ENCODE measurements at regions of chr18 and their contacts with region 1.

Region 1: GRCh38 chr18:34611904-34612303 is 98.2 kb upstream of the DTNA start:
- DNase-seq: peak; percentile 79

Region 2: GRCh38 chr18:34562252-34562870 is 49.5 kb before region 1 on chr18:
- intact Hi-C with region 1: no loop called
- DNase-seq: no peak

Region 3: GRCh38 chr18:34650121-34650545 is 38.2 kb after region 1 on chr18:
- intact Hi-C with region 1: loop called (anchors 5 kb)
- DNase-seq: no peak

Region 4: GRCh38 chr18:36058674-36059073 is 1446.8 kb after region 1 on chr18:
- intact Hi-C with region 1: no loop called
- DNase-seq: no peak

Measured in cardiac septum (tissue), 1 donor.